HepG2 (cell line): ENCODE measurements at regions of chr3 and their contacts with region 1.

Region 1: DNA sequence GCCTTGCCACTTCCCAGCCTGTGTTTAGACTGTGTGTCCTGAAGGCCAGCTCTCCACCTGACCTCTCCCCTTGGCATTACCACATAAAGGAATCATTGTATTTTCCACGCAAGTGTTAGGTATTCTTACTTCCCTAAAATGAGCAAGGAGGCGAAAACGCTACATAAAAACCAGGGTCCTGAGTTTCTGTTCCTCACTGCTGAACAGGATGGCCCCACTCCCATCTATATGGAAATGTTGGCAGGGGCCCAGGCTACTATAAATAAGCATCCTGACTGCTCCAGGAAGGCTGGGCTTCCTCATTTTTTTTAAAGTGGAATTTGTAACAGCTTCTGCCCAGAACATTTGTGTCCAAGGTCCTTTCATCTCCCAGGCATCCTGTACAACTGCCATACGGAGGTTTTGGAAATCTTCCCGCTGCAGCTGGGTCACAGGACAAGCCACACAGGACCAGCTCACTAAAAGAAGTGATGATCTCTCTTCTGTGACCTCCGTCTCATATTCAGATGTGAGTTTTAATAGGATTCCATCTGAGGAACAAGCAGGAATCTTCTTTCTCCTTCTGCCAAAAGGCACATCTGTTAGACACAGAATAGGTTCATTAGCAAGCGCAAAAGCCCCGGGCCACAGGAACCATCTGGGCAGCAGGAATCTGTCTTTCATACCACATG is 56.4 kb upstream of the LIMD1 start:
- DNase-seq: no peak
- ATAC-seq: no peak
- H3K4me3 ChIP-seq: no peak overlapping the region
- H3K27ac ChIP-seq: no peak overlapping the region
- H3K4me1 ChIP-seq: no peaks in the 10 kb centered on the region
- H3K27me3 ChIP-seq: no peaks in the 10 kb centered on the region
- CTCF ChIP-seq: no peak
- EP300 ChIP-seq: no peak
- POLR2A ChIP-seq: no peak
- RAD21 ChIP-seq: no peak

Region 2: DNA sequence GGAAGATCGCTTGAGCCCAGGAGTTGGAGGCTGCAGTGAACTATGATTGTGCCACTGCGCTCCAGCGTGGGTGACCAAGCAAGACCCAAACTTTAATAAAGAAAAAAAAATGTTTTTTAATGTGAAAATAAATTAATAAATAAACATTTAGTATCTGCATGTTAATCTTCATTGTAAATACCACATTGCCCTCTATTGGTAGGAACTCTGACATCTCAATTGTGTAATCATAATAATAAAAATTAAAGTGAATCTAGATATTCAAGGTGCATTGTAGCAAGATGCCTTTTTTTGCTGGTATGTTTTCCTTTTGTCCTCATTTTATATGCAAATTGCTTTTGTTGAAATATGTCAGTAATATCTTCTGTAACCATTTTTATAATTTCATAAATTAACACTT is 38.6 kb before region 1 on chr3:
- CTCF ChIA-PET with region 1: no interaction called
- POLR2A ChIA-PET with region 1: no interaction called
- in situ Hi-C with region 1: no loop called
- intact Hi-C with region 1: no loop called
- DNase-seq: peak; percentile 12
- ATAC-seq: no peak
- H3K4me3 ChIP-seq: no peak overlapping the region
- H3K27ac ChIP-seq: no peak overlapping the region
- H3K4me1 ChIP-seq: no peaks in the 10 kb centered on the region
- H3K27me3 ChIP-seq: no peaks in the 10 kb centered on the region
- CTCF ChIP-seq: no peak
- EP300 ChIP-seq: no peak
- POLR2A ChIP-seq: no peak
- RAD21 ChIP-seq: no peak

Region 3: DNA sequence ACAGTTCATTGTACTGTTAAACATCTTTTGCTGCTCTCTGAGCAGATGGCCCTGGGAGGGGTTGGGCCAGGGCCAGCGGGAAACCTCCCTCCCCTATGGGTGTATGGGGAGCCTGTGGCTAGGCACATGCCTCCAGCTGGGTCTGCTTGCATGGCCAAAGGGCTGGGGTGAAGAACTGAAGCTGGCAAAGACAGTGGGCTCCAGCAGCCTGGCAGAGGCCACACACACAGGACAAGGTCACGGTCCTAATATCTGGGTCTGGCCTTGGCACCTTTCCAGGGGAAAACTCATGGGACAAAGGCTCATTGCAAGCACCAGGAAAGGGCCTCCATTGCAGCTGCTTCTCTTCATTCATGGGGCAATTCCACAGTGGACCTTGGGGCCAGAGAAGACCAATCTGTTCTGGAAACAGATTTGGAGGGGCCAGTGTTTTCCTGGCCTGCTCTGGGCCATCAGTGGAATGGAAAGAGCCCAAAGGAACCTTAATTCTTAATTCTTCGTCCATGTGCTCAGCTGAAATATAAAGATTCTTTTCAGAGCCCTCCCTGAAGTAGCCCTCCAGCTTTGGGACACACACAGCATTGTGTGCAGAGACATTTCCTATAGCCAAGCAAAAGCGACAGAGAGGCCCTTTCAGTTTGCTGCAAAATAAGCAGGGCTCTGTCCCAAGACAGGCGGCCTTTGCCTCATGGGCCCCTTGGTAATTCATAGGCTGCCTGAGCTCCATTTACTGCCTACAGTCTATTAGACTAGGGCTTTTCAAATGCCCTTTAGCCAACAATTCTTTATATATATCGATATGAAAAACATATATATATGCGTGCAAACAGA is 45.1 kb after region 1 on chr3:
- CTCF ChIA-PET with region 1: no interaction called
- POLR2A ChIA-PET with region 1: no interaction called
- in situ Hi-C with region 1: no loop called
- intact Hi-C with region 1: loop called (anchors 10 kb)
- DNase-seq: peak; percentile 68
- ATAC-seq: peak; percentile 85
- H3K4me3 ChIP-seq: peak overlapping the region in 2 of 3 experiments; percentile 10 to 31; a peak in 1 of 6 replicates
- H3K27ac ChIP-seq: no peak overlapping the region
- H3K4me1 ChIP-seq: peaks cover 15% of the 10 kb centered on the region
- H3K27me3 ChIP-seq: no peaks in the 10 kb centered on the region; a peak in 1 of 5 replicates
- CTCF ChIP-seq: no peak
- EP300 ChIP-seq: no peak
- POLR2A ChIP-seq: no peak
- RAD21 ChIP-seq: no peak

Region 4: GRCh38 chr3:46017720-46018119 is 479.6 kb after region 1 on chr3:
- CTCF ChIA-PET with region 1: no interaction called
- POLR2A ChIA-PET with region 1: no interaction called
- in situ Hi-C with region 1: no loop called
- intact Hi-C with region 1: no loop called
- DNase-seq: no peak
- ATAC-seq: no peak
- H3K4me3 ChIP-seq: no peak overlapping the region
- H3K27ac ChIP-seq: no peak overlapping the region
- H3K4me1 ChIP-seq: no peaks in the 10 kb centered on the region
- H3K27me3 ChIP-seq: peaks cover 3 to 16% of the 10 kb centered on the region in 2 experiments; a peak in 3 of 5 replicates
- CTCF ChIP-seq: no peak
- EP300 ChIP-seq: no peak
- POLR2A ChIP-seq: no peak
- RAD21 ChIP-seq: no peak